HEK293 (cell line): ENCODE measurements at regions of chr10 and their contacts with region 1.

Region 1: DNA sequence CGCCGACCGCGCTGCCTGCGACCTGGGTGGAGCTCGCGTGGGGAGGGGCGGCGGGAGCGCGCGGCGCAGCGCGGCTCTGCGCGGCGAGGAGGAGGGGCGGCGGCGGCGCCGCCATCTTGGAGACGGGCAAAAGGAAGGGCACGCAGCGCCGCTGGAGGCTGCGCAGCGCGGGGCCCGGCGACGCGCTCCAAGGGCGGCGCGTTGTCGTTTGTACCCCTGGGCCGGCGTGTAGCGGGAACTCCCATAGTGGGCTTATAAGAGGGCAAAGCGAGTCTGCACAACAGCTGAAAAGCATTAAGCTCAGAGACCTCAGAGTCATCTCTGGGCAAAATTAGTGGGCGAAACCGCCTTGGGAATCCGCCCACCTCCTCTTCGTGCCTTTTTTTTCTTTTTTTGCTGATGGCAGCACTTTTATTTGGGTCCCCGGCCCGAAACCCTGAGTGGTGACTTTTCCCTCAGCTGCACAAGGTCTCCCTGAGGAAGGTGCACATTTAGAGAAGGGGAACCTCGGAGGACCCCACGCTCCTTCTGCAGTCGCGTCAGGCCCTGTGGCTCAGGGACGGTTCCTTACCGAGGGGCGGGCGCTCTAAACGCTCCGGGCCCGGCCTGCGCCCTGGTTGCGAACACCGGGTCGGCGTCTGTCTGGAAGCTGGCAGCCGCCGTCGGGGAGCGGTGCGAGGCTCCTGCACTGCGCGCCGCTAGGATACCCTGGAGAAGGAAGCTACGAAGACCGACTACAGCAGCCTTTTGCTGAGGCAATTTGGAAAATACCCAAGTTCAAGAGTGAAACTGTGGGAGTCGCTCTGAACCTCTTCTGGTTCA is 428 bp upstream of the MCMBP start:
- H3K4me3 ChIP-seq: peak overlapping the region; percentile 76
- H3K27ac ChIP-seq: peak overlapping the region; percentile 99
- H3K4me1 ChIP-seq: no peaks in the 10 kb centered on the region
- CTCF ChIP-seq: 0 out of 2 replicates have a peak, but pooled peaks have one; percentile 20

Region 2: DNA sequence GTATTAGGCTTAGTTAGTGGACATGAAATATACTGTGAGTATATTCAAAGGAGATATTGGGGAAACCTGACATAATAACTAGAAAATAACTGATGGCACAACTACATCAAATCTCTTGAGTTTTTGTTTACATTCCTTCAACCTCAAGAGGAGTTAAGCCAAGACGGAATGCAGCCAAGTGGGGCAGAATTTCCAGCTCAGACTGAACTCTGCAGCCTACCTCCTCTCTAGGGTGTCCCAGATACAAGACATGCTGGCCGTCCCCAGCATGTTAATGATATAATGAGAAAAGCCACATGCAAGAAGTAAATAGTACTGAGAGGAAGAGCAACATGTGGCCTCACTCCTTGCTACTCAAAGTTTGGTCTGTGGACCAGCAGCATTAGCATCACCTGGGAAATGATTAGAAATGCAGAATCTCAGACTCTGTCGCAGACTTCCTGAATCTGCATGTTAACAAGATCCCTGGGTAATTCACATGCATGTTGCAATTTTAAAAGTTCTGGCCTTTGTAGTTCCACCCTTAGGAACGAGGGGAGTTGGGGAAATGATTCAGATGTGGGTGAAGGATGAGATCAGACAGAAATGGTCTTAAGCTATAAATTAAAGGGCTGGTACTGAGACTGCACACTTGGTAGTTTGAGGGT is 999.9 kb before region 1 on chr10:
- CTCF ChIA-PET with region 1: no interaction called
- POLR2A ChIA-PET with region 1: no interaction called
- H3K4me3 ChIP-seq: no peak overlapping the region
- H3K27ac ChIP-seq: no peak overlapping the region
- H3K4me1 ChIP-seq: peaks cover 12% of the 10 kb centered on the region
- CTCF ChIP-seq: no peak

Region 3: DNA sequence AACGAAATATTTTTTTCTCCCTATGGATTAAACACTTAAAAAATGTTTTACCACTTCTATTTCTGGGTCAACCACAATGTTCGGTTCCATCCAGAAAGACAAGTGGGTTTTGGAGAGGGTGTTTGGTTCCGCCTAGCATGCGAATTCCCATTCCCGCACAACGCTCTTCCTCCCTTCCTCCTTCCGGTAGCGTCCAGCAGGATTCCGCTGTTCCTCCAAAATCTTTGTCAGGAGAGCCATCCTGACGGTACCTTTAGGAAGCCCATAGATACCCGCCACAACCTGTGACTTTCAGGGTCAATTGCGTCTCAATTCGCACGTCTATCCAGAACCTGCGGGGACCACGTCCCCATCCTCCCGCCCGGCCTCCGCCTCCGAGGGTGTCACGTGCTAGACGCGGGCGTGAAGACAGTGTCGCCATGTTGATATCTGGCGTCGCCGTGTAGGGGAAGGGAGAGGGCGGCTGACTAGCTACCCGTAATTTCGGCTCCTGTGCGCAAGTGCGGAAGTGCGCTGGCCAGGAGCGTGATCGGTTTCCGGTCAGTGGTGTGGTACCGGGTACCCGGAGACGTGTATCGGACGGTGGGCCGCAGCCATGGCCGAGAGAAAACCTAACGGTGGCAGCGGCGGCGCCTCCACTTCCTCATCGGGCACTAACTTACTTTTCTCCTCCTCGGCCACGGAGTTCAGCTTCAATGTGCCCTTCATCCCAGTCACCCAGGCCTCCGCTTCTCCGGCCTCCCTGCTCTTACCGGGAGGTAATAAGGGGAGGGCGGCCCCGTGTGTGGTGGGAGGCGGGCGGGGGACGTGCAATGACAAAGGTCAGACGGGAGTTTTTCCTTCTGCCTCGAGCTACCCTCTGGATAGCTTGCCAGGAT is 19.4 kb after region 1 on chr10 and contains the start of gene SEC23IP:
- CTCF ChIA-PET with region 1: interaction called, 3 read pairs
- POLR2A ChIA-PET with region 1: interaction called, 49 read pairs
- H3K4me3 ChIP-seq: peak within 1 kb of the TSS; percentile 77
- H3K27ac ChIP-seq: peak within 1 kb of the TSS; percentile 66; the same call in 1 of the 2 replicates
- H3K4me1 ChIP-seq: peaks cover 27% of the 10 kb centered on the region
- CTCF ChIP-seq: no peak